Activated naive CD4-positive, alpha-beta T cell treated with anti-CD3 and anti-CD28 coated beads for 36 hours (primary cell): ENCODE measurements at regions of chr1 and their contacts with region 1.

Region 1: DNA sequence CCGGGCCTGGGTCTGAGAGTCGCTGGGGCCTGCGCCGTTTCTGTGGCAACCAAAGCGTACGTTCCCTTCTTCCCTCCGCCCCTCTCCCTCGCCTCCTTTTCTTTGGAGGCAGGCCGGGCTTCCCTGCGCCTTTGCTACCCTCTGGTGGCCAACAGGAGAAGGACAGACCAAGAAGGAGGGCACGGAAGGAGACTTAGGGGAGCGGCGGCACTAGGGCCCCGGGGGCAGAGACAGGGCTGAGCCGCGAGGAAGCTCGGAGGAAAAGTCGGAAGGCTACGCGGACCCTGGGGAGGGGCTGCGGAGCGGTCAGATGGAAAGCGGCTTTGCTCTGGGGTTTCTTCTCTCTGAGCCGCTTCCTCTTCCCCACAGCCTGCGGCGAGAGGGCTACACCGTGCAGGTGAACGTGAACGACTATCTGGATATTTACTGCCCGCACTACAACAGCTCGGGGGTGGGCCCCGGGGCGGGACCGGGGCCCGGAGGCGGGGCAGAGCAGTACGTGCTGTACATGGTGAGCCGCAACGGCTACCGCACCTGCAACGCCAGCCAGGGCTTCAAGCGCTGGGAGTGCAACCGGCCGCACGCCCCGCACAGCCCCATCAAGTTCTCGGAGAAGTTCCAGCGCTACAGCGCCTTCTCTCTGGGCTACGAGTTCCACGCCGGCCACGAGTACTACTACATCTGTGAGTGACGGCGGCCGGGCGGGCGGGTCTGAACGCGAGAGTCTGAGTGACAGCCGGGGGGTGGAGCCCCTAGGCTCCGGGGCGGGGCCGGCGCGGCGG is 6.3 kb downstream of the EFNA3 start:
- DNase-seq: peak; percentile 94
- H3K4me3 Mint-ChIP-seq: peak overlapping the region; percentile 95
- H3K27ac Mint-ChIP-seq: peak overlapping the region; percentile 88
- H3K4me1 Mint-ChIP-seq: peaks cover 34% of the 10 kb centered on the region
- H3K27me3 Mint-ChIP-seq: peaks cover 33% of the 10 kb centered on the region

Region 2: GRCh38 chr1:154791292-154792166 is 293.4 kb before region 1 on chr1:
- CTCF ChIA-PET with region 1: no interaction called
- intact Hi-C with region 1: loop called (anchors 5 kb)
- DNase-seq: peak; percentile 92
- H3K4me3 Mint-ChIP-seq: peak overlapping the region; percentile 47
- H3K27ac Mint-ChIP-seq: peak overlapping the region; percentile 88
- H3K4me1 Mint-ChIP-seq: peaks cover 29% of the 10 kb centered on the region
- H3K27me3 Mint-ChIP-seq: no peaks in the 10 kb centered on the region

Region 3: DNA sequence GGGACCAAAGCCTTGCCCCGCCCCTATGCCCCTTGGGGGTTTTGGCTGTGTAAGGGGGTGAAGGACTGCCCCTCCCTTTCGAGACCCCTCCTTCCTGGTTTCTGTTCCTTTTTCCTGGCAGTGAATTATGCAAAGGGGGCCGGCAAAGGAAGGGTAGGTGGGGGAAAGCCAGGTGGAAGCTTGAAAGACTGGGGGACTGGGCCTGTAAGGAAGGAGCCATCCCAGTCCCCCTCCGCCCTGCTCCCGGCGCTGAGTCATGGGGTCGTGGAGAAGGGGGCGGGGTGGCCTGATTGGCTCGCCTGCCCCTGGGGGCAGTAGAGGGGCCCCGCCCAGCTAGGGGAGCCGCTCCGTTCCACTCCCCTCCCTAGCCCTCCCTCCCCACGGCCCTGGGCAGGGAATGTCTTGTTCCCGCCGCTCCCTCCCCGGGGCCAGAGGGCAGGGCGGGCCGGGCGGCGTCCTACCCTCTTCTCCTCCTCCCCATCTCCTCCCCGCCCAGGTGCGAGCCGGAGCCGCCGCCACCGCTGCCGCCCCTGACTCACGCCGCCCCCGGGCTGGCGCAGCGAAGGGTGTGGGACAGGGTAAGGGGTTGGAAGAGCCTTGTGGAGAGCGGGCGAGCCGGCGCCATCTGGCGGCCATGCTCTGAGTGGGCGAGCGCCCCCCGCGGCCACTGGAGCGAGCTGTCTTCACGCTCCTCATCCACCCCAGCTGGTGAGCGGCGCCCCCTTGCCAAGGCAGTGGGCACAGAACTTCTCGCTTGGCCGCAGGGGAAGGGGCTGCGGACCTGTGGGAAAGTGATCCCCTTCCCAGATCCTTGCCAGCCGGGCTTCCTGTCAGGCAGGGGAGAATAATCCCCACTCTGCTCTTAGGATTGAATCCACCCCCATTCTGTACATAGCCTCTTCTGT is 67.6 kb before region 1 on chr1:
- CTCF ChIA-PET with region 1: interaction called, 9 read pairs
- intact Hi-C with region 1: loop called (anchors 2 kb)
- DNase-seq: peak; percentile 94
- H3K4me3 Mint-ChIP-seq: peak overlapping the region; percentile 56
- H3K27ac Mint-ChIP-seq: peak overlapping the region; percentile 85
- H3K4me1 Mint-ChIP-seq: peaks cover 65% of the 10 kb centered on the region
- H3K27me3 Mint-ChIP-seq: no peaks in the 10 kb centered on the region

Region 4: DNA sequence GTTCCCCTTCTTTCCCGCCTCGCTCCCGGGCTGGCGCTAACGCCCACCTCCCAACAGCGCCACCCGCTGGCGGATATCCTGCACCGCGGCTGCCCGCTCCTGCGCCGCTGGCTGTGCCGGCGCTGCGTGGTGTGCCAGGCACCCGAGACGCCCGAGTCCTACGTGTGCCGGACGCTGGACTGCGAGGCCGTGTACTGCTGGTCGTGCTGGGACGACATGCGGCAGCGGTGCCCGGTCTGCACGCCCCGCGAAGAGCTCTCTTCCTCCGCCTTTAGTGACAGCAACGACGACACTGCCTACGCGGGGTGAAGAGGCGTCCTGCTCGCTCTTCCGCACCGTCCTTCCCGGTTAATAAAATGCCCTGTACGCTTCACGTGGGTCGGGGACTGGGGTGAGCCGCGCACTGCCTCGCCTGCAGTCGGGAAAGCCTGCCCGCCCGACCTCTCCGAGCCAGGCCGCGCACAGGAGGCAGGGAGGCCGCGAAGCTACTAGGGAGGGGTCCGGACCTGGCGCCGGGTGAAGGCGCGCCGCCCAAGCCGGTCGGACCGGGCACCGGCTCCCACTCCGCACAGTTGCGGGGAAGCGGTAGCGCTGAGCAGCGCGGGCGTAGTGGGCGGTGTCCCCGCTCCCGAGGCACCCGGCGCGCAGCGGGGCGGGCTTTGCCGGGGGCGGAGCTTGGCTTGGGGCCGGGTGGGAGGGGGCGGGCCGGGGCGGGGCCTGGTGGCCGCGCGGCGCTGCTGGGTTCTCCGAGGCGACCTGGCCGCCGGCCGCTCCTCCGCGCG is 34.2 kb before region 1 on chr1 and contains the start of gene ADAM15:
- CTCF ChIA-PET with region 1: interaction called, 75 read pairs
- intact Hi-C with region 1: loop called (anchors 1 kb)
- DNase-seq: peak; percentile 85
- H3K4me3 Mint-ChIP-seq: peak within 1 kb of the TSS; percentile 84
- H3K27ac Mint-ChIP-seq: no peak within 1 kb of the TSS
- H3K4me1 Mint-ChIP-seq: peaks cover 24% of the 10 kb centered on the region
- H3K27me3 Mint-ChIP-seq: no peaks in the 10 kb centered on the region
- total RNA-seq, gene ADAM15: 53.8 to 55.8 TPM

Region 5: DNA sequence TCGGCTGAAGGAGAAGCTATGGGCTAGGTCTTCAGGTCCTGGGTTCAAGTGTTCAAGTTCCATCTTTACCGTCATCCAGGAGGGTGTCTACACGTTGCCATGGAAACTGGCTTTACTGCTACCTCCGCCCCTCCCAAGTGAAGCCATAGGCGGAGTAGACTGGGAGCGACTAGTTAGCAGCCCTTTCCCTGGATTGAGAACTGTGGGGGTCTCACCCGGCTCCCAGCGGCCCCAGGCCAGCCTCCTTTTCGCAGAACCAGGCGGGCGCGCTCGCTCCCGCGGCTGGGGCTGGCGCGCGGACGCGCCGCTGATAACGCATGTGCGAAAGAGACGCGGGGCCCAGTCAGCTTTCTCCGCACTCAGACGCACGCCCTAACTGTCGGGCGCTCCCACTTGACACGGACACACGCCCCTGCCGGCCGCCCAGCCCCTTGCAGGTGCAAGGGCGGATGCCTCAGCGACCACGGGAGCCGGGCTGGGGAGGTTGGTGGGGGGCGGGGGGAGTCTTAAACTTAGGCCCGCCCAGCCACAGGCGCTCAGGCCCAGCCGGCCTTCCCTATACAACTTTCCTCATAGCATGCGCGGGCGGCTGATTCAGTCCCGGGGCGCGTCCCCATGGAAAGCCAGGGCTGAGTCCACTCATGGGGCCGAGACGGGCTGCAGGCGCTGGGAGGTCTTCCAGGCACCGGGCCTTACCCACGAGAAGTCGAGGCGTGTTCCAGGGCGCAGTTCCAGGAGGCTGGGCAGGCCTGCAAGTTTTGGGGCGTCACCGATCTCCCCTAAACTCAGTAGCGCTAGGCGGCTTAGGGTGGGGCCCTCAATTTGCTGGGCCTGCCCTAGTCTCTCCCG is 14.0 kb before region 1 on chr1:
- CTCF ChIA-PET with region 1: interaction called, 51 read pairs
- intact Hi-C with region 1: loop called (anchors 1 kb)
- DNase-seq: peak; percentile 86
- H3K4me3 Mint-ChIP-seq: peak overlapping the region; percentile 42
- H3K27ac Mint-ChIP-seq: no peak overlapping the region
- H3K4me1 Mint-ChIP-seq: peaks cover 15% of the 10 kb centered on the region
- H3K27me3 Mint-ChIP-seq: no peaks in the 10 kb centered on the region

Region 6: DNA sequence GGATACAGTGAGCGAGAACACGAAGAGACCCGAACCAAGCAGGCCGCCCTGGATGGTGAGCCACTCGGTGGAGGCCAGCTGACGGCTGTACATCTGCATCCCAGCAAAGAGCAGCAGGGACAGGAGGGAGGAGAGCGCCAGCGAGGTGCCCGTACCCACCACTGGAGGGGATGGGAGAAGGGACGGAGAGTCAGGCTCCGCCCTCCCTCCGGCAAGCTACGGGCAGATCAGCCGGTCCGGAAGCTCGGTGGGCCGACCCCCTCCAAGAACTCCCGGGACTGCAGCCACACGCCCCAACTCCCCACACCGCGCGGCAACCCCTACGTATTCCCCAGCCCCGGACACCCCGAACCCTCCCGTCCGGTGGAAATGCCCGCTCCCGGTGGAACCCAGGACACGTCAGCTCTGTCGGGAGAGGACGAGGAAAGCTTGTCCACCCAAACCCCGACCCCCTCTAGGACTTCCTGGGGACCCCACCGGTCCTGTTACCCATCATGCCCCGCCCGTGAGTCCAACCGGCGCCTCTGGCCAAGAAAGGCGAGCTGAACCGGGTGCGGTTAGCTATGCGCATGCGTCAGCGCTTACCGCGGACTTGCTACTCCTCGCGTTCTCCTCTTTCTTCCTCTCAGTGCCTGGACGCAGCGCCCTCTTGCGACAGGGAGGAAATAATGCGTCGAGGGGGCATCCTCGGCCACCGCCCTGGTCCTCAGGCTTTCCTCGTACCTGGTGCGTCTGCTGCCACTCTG is 88.0 kb after region 1 on chr1 and contains the start of gene KRTCAP2:
- CTCF ChIA-PET with region 1: interaction called, 234 read pairs
- intact Hi-C with region 1: no loop called
- DNase-seq: peak; percentile 98
- H3K4me3 Mint-ChIP-seq: peak within 1 kb of the TSS; percentile 93
- H3K27ac Mint-ChIP-seq: peak within 1 kb of the TSS; percentile 97
- H3K4me1 Mint-ChIP-seq: peaks cover 46% of the 10 kb centered on the region
- H3K27me3 Mint-ChIP-seq: no peaks in the 10 kb centered on the region
- total RNA-seq, gene KRTCAP2: 129 to 137 TPM